GM13977 (cell line): ENCODE measurements at regions of chr1 and their contacts with region 1.

Region 1: GRCh38 chr1:172719694-172720138 is 60.8 kb downstream of the FASLG start:
- DNase-seq: peak; percentile 55
- CTCF ChIP-seq: peak; percentile 80

Region 2: DNA sequence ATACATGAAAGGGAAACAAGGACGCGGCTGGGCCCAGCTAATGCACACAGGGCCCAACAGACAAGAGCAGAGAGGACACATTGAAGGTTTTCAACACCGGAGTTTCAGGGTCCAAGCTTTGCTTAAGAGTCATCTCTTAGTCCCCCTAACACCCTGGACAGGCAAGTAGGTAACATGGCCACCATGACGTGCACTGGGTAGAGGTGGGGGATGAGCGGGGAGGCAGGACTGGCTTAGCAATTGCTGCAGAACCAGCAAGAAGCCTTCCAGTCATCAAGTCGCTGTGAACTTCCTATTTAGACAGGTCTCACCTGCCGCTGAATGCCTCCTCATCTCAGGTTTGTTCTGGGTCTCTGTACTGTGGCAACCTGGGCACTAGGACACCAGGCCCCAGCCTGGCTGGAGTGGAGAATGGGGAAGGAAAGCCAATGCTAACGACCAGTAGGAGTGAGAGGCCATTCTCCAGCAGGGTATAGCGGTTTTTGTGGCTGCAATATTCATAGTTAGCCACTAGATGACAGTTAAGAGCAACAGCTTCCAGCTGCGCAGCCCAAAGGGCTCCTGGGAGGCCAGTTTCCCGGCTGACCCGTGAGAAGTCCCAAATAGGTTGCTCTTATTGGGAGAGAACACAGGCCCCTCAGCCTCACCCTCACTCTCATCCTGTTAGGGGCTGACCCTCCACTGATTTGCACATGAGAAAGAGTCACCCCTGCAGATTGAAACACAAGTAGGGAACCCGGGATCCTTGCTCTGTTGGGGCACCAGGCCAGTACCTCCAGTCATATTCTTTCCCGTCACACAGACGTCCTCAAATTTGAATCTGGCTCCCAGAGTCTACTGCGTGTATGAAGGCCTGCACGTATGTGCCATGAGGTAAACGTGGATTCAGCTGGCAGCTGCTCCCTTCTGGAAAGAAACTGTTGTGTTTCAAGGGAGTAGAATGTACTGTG is 269.9 kb before region 1 on chr1:
- in situ Hi-C with region 1: loop called (anchors 25 kb)
- DNase-seq: peak; percentile 54
- CTCF ChIP-seq: peak; percentile 72

Region 3: GRCh38 chr1:172613294-172613693 is 106.4 kb before region 1 on chr1:
- in situ Hi-C with region 1: loop called (anchors 10 kb)
- DNase-seq: no peak
- CTCF ChIP-seq: no peak